Tibial artery (tissue), 4 donors: ENCODE measurements at regions of chr10 and their contacts with region 1.

Region 1: DNA sequence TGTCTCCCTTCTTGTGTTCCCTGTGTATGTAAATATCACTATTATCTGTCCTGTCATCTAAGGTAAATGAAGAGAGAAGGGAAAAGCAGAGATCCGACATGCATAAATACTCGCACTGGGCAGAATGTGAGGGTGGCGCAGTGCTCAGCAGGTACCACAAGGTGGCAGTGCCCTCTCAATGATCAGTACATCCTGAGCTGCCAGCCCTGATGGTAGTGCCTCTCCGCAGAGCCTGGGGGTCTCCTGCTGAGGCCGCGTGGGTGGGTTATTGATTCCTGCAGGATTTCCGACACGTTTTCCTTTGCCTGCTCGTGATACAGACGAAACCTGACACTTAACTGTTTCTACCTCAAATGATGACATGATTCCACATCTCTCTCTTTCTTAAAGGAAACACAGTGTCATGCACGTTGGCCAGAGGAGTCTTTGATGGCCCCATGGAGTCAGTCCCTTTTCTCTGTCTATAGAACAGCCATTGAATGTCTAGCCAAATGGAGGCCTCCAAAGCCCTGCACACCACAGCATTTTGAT is 19.8 kb downstream of the RGR start:
- DNase-seq: peak; percentile 73 to 75
- H3K4me3 ChIP-seq: no peak overlapping the region
- H3K27ac ChIP-seq: no peak overlapping the region
- H3K4me1 ChIP-seq: no peaks in the 10 kb centered on the region
- H3K27me3 ChIP-seq: peaks cover 0 to 45% of the 10 kb centered on the region in 2 donors
- CTCF ChIP-seq: peak; percentile 86 to 89

Region 2: DNA sequence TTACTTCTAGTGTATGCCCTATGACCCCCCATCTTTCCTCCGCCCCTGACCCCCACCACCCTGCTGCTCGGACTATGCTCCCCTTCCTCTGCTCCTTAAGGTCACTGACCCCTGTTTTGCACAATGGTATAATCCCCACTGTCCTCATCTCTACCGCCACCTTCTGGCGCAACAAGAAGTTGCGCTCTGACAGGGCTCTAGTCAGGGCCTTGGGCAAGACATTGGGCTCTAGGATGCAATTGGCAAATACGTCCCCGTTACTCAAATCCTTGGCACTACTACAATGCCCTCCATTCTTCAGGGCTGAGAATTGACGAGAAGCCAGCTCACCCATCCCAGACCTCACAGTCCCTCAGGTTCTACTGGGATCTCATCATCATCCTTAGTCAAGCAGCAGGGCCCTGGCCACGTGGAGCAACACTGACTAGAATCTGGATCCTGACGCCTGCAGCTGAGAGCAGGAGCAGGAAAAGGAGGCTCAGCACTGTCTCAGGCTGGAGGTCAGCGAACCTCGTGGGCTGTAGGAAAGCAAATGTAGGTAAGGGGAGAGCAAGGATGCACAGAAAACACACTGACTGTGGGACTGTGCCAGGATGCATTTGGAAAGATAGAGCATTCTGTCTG is 50.0 kb before region 1 on chr10:
- intact Hi-C with region 1: no loop called
- DNase-seq: peak in 1 of 2 donors; percentile 15
- H3K4me3 ChIP-seq: no peak overlapping the region
- H3K27ac ChIP-seq: no peak overlapping the region
- H3K4me1 ChIP-seq: no peaks in the 10 kb centered on the region
- H3K27me3 ChIP-seq: peaks cover 0 to 11% of the 10 kb centered on the region in 2 donors
- CTCF ChIP-seq: no peak

Region 3: DNA sequence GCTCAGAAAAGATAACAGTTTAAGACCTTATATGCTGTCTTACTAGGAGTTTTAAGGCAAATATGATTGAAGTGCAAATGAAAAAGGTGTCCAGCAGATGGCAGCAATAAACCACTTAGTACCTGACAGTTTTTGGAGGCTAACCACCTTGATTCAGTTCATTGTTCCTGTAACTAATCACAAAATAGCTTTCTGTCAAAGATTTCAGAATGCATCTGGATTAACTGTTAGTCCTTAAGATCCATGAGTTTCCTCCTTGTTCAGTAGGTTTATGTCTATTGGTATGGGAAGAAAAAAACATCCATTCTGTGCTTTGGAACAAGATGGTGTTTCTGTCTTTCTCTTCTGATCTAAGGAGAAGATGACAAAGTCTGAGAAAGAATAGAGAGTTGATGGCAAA is 110.3 kb after region 1 on chr10:
- intact Hi-C with region 1: loop called (anchors 5 kb)
- DNase-seq: no peak
- H3K4me3 ChIP-seq: no peak overlapping the region
- H3K27ac ChIP-seq: no peak overlapping the region
- H3K4me1 ChIP-seq: peaks cover 0 to 4% (median 0%) of the 10 kb centered on the region in 4 donors
- H3K27me3 ChIP-seq: no peaks in the 10 kb centered on the region
- CTCF ChIP-seq: peak; percentile 72 to 81